ENCODE measurements at regions of chr20 and their contacts with region 1.

Region 1: GRCh38 chr20:36591854-36592641 is 13.5 kb upstream of the RAB5IF start:
- DNase-seq: no peak
- CTCF ChIP-seq: peak; percentile 49

Region 2: GRCh38 chr20:36573103-36573794 is 18.8 kb before region 1 on chr20 and contains the start of gene TGIF2:
- CTCF ChIA-PET with region 1: interaction called, 29 read pairs
- POLR2A ChIA-PET with region 1: interaction called, 7 read pairs
- DNase-seq: peak; percentile 99
- CTCF ChIP-seq: no peak

Region 3: GRCh38 chr20:36579996-36580545 is 12.0 kb before region 1 on chr20:
- CTCF ChIA-PET with region 1: interaction called, 29 read pairs
- POLR2A ChIA-PET with region 1: interaction called, 7 read pairs
- DNase-seq: no peak
- CTCF ChIP-seq: no peak

Region 4: GRCh38 chr20:36709126-36709525 is 117.1 kb after region 1 on chr20:
- CTCF ChIA-PET with region 1: no interaction called
- POLR2A ChIA-PET with region 1: no interaction called
- DNase-seq: no peak
- CTCF ChIP-seq: no peak